ENCODE measurements at regions of chr11 and their contacts with region 1.

Region 1: DNA sequence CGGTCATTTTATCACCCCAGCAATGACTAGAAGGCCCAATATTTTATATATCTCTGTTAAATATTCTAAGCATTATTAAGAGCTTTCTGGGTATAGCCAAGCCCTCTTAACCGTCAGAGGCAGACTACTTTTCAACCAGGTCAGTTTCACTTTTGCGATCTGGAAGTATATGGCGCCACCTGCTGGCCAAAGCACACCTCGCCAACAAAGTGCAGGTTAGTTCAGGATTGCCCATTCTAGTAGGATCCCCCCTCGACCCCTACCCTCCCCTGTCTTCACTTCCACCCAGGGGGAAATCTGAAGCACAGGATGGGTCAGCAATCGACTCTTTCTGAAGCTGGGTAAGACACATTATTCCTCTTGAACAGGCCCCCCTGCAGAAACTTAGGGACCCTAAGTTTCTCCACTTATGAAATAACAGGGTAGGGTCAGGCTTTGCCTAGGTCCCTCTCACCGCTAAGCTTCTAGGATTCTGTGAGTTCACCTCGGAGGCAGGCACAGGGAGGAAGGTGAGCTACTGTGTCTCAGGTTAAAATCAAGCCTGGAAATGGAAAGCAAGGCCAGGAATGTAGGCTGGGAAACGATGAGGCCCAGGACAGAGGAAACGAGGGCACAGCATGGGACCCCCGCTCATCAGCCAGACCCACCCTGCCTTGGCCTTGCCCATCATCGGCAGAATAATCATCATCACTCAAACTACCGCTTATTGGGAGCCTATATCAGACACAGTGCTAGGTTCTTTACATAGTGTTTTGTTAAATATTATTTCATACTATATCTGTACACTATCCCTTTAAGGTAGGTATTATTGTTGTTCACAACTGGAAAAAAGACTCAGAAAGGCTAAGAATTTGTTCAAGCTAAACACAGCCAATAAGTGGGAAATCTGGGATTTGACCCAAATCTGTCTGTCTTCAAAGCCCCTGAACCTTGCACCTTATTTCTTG is 35.6 kb downstream of the KCNJ1 start:
- DNase-seq: peak; percentile 92
- ATAC-seq: peak; percentile 85
- H3K4me3 Mint-ChIP-seq: peak overlapping the region; percentile 52
- H3K27ac Mint-ChIP-seq: peak overlapping the region; percentile 92
- H3K4me1 Mint-ChIP-seq: peaks cover 26% of the 10 kb centered on the region
- H3K27me3 Mint-ChIP-seq: no peaks in the 10 kb centered on the region
- CTCF ChIP-seq: peak; percentile 82

Region 2: DNA sequence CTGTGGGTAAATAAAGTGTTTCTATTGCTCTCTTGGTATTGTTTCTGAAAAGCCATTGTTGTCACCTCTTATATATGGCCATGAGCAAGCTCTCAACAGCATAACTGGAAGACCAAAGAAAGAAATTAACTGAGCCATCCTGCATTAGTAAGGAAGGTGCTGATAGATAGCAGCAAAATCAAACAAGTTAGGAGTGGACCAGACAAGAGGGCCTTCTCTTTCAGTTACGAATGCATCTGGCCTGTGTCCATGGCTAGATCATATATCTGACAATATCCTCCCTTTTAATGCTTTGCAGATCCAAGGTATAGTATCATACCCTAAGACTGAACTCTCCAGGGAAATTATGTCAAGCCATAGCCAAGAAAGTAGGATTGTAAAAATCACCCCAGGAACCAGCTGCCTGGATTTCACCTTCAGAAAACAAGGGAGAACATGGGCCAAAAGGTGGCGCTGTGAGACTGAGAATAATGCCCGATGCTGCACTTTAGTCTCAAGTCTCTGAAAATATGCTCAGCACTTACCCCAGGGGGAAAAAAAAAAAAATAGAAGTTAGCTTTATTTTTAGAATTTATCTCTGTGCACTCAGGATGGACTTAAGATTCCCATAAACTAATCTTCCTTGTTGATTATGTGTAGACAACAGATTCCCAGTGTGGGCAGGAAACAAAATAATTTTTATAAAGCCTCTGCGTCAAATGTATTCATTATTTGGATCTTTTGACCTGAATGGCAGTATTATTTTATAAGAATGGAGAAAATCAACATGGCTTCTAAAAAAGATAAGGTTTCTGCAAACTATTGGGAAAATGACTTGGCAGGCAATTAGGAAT is 659.2 kb before region 1 on chr11:
- CTCF ChIA-PET with region 1: interaction called, 44 read pairs
- POLR2A ChIA-PET with region 1: no interaction called
- intact Hi-C with region 1: loop called (anchors 2 kb)
- DNase-seq: peak; percentile 96
- ATAC-seq: peak; percentile 81
- H3K4me3 Mint-ChIP-seq: no peak overlapping the region
- H3K27ac Mint-ChIP-seq: no peak overlapping the region
- H3K4me1 Mint-ChIP-seq: peaks cover 16% of the 10 kb centered on the region
- H3K27me3 Mint-ChIP-seq: no peaks in the 10 kb centered on the region
- CTCF ChIP-seq: peak; percentile 69

Region 3: GRCh38 chr11:128290106-128290840 is 541.2 kb before region 1 on chr11:
- CTCF ChIA-PET with region 1: interaction called, 10 read pairs
- POLR2A ChIA-PET with region 1: no interaction called
- intact Hi-C with region 1: loop called (anchors 10 kb)
- DNase-seq: peak; percentile 87
- ATAC-seq: peak; percentile 62
- H3K4me3 Mint-ChIP-seq: peak overlapping the region; percentile 83
- H3K27ac Mint-ChIP-seq: peak overlapping the region; percentile 95
- H3K4me1 Mint-ChIP-seq: peaks cover 94% of the 10 kb centered on the region
- H3K27me3 Mint-ChIP-seq: no peaks in the 10 kb centered on the region
- CTCF ChIP-seq: peak; percentile 88

Region 4: DNA sequence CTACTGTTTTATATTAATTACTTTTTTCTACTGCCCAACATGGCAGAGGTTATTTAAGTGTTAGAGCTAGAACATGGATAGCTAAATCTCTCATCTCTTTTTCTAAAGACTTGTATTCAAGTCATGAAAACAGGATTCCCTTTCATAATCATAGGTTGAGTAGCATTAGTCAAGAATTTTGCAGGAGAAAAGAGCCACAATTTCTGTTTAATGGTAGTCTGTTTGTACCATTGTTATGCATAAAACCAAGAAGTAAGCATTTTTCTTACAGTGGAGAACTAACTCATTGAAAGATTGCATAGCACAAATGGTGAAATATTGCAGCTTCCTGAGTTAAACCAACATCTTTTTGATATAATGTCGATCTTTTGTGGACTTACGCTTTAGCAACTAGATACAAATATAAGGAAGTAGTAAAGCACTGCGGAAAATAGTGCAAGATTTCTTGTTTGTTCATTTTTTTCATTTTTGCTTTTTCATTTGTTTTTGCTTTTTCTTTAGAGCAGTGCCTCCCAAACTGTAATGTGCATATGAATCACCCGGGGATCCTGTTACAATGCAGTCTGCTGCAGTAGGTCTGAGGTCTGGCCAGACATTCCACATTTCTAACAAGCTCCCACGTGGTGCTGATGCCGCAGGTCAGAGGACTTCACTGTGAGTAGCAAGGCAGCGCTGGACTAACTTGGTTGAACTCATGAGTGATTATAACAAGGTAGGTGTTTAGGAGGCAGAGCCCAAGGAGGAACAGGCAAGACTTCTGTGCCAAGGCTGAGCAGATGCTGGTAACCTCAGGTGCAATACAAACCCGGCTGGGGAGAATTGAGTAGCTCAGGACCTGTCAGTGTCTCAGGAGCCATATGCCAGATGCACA is 248.7 kb before region 1 on chr11:
- CTCF ChIA-PET with region 1: no interaction called
- POLR2A ChIA-PET with region 1: no interaction called
- intact Hi-C with region 1: no loop called
- DNase-seq: peak; percentile 35
- ATAC-seq: no peak
- H3K4me3 Mint-ChIP-seq: peak overlapping the region; percentile 55
- H3K27ac Mint-ChIP-seq: peak overlapping the region; percentile 72
- H3K4me1 Mint-ChIP-seq: peaks cover 47% of the 10 kb centered on the region
- H3K27me3 Mint-ChIP-seq: no peaks in the 10 kb centered on the region
- CTCF ChIP-seq: no peak

Region 5: GRCh38 chr11:128709402-128709801 is 122.0 kb before region 1 on chr11:
- CTCF ChIA-PET with region 1: no interaction called
- POLR2A ChIA-PET with region 1: no interaction called
- intact Hi-C with region 1: no loop called
- DNase-seq: no peak
- ATAC-seq: no peak
- H3K4me3 Mint-ChIP-seq: no peak overlapping the region
- H3K27ac Mint-ChIP-seq: peak overlapping the region; percentile 11
- H3K4me1 Mint-ChIP-seq: peaks cover 92% of the 10 kb centered on the region
- H3K27me3 Mint-ChIP-seq: no peaks in the 10 kb centered on the region
- CTCF ChIP-seq: no peak

Region 6: DNA sequence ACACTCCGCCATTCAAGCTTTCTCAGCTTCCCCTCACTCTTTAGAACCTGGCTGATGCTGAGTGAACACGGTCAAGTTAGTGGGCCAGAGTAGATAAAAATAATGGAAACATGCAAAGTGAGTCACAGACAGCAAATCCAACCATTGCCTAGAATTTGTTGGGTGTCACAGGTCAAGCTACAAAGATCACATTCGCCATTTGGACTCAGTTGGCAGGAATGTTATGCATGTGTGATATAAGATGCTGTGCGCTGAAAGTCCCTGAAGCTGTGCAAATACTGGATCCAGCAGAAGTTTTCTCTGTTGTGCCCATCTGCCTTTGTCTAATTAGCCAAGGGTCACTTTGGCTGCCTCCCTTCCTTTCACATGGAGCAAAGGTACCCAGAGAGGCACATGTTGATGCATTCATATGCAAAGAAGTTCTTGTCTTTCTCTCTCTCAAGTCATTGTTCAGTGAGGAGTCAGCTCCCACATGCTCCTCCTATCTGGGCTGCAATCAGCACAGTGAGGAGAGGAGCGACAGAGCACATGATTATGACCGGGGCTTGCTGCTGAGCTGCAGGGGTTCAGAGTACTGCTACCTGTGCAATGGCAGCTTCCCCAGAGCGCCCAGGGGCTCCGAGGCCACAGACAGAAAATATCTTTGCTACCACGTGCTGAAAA is 97.9 kb before region 1 on chr11:
- CTCF ChIA-PET with region 1: interaction called, 22 read pairs
- POLR2A ChIA-PET with region 1: no interaction called
- intact Hi-C with region 1: no loop called
- DNase-seq: peak; percentile 58
- ATAC-seq: peak; percentile 53
- H3K4me3 Mint-ChIP-seq: peak overlapping the region; percentile 51
- H3K27ac Mint-ChIP-seq: peak overlapping the region; percentile 68
- H3K4me1 Mint-ChIP-seq: peaks cover 92% of the 10 kb centered on the region
- H3K27me3 Mint-ChIP-seq: no peaks in the 10 kb centered on the region
- CTCF ChIP-seq: no peak

Region 7: GRCh38 chr11:128784059-128784804 is 47.2 kb before region 1 on chr11:
- CTCF ChIA-PET with region 1: interaction called, 14 read pairs
- POLR2A ChIA-PET with region 1: no interaction called
- intact Hi-C with region 1: no loop called
- DNase-seq: no peak
- ATAC-seq: no peak
- H3K4me3 Mint-ChIP-seq: no peak overlapping the region
- H3K27ac Mint-ChIP-seq: peak overlapping the region; percentile 50
- H3K4me1 Mint-ChIP-seq: peaks cover 29% of the 10 kb centered on the region
- H3K27me3 Mint-ChIP-seq: no peaks in the 10 kb centered on the region
- CTCF ChIP-seq: no peak

Region 8: GRCh38 chr11:128956401-128957201 is 125.2 kb after region 1 on chr11:
- CTCF ChIA-PET with region 1: no interaction called
- POLR2A ChIA-PET with region 1: no interaction called
- intact Hi-C with region 1: no loop called
- DNase-seq: peak; percentile 21
- ATAC-seq: peak; percentile 55
- H3K4me3 Mint-ChIP-seq: no peak overlapping the region
- H3K27ac Mint-ChIP-seq: no peak overlapping the region
- H3K4me1 Mint-ChIP-seq: peaks cover 2% of the 10 kb centered on the region
- H3K27me3 Mint-ChIP-seq: peaks cover 6% of the 10 kb centered on the region
- CTCF ChIP-seq: peak; percentile 87

Measured in activated CD8-positive, alpha-beta T cell treated with anti-CD3 and anti-CD28 coated beads for 36 hours (primary cell).